ENCODE measurements at regions of chr4 and their contacts with region 1.

Region 1: DNA sequence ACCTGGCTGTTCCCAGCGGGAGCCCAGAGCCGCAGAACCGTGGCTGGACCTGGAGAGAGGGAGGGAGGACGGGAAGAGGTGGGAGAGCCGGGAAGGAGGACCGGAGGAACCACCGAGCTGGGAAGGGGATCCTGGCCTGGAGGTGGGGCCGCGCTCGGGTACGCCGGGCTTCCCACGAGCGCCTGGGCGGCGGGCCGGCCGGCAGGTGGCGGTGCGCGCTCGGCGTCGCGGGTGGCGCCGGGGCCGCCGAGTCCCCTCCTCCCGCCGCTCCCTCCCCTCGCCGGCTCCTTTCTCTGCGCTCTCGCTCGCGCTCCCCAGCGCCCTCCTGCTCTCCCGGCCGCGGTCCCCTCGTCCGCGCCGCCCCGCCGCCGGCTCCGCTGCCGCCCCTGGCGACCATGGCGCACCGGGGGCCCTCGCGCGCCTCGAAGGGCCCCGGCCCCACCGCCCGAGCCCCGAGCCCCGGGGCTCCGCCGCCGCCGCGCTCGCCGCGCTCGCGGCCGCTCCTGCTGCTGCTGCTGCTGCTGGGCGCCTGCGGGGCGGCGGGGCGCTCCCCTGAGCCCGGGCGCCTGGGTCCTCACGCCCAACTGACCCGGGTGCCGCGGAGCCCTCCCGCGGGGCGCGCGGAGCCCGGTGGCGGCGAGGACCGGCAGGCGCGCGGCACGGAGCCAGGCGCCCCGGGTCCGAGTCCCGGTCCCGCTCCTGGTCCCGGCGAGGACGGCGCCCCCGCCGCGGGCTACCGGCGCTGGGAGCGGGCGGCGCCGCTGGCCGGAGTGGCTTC is at the start of gene SORCS2:
- DNase-seq: no peak
- H3K4me3 ChIP-seq: peak within 1 kb of the TSS; percentile 5 to 43 (median 35)
- H3K27ac ChIP-seq: no peak within 1 kb of the TSS
- H3K4me1 ChIP-seq: peaks cover 15% of the 10 kb centered on the region
- H3K27me3 ChIP-seq: peaks cover 12% of the 10 kb centered on the region
- CTCF ChIP-seq: peak; percentile 26 to 49
- total RNA-seq, gene SORCS2: 1.6 to 10.7 TPM

Region 2: GRCh38 chr4:7206911-7207567 is 14.6 kb after region 1 on chr4:
- CTCF ChIA-PET with region 1: no interaction called
- dilution Hi-C with region 1: no loop called
- in situ Hi-C with region 1: no loop called
- intact Hi-C with region 1: loop called (anchors 1 kb)
- DNase-seq: peak; percentile 78
- H3K4me3 ChIP-seq: no peak overlapping the region
- H3K27ac ChIP-seq: peak overlapping the region; percentile 3
- H3K4me1 ChIP-seq: peaks cover 30% of the 10 kb centered on the region
- H3K27me3 ChIP-seq: no peaks in the 10 kb centered on the region
- CTCF ChIP-seq: no peak

Region 3: GRCh38 chr4:7295911-7296660 is 103.6 kb after region 1 on chr4:
- CTCF ChIA-PET with region 1: no interaction called
- dilution Hi-C with region 1: no loop called
- in situ Hi-C with region 1: loop called in 1 of 2 experiments (anchors 5 kb)
- intact Hi-C with region 1: loop called (anchors 1 kb)
- DNase-seq: peak; percentile 19
- H3K4me3 ChIP-seq: no peak overlapping the region
- H3K27ac ChIP-seq: no peak overlapping the region
- H3K4me1 ChIP-seq: no peaks in the 10 kb centered on the region
- H3K27me3 ChIP-seq: no peaks in the 10 kb centered on the region
- CTCF ChIP-seq: peak; percentile 54 to 80

Region 4: DNA sequence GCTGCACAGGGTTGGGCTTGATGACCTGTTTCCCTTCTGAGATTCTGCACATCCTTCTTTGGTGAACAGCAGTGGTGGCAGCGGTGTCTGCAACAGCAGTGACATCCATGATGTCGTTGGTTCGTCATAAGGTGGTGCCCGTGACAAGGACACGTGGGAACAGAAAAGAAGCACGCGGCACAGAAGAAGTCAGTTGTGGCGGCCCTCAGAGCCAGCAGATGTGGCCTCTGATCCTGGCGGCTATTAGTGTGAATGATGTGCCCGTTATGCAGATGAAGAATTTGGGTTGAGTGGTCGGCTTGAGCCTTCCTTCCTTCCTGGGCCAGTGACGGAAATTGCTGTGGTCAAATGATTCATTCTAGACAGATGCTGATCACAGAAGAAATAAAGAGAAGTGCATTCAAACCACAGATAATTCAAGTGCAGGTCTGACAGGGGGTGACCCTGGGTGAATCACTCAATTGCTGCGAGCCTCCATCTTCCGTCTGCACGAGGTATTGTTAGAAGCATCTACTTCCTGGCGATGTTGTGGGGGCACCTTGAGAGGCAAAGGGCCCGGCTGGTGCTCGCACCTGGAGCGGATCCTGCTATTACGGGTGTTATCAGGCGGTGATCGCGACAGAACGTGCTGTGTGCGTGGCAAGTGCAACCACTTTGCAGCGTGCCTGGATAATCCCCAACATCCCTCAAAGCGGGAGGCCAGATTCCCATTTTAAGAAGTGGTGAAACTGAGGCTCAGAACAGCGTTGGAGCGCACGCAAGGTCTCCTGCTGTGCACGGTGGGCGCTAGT is 457.5 kb after region 1 on chr4:
- CTCF ChIA-PET with region 1: no interaction called
- dilution Hi-C with region 1: no loop called
- in situ Hi-C with region 1: no loop called
- intact Hi-C with region 1: loop called (anchors 5 kb)
- DNase-seq: peak; percentile 82
- H3K4me3 ChIP-seq: no peak overlapping the region
- H3K27ac ChIP-seq: peak overlapping the region; percentile 33
- H3K4me1 ChIP-seq: peaks cover 51% of the 10 kb centered on the region
- H3K27me3 ChIP-seq: no peaks in the 10 kb centered on the region
- CTCF ChIP-seq: no peak

Region 5: DNA sequence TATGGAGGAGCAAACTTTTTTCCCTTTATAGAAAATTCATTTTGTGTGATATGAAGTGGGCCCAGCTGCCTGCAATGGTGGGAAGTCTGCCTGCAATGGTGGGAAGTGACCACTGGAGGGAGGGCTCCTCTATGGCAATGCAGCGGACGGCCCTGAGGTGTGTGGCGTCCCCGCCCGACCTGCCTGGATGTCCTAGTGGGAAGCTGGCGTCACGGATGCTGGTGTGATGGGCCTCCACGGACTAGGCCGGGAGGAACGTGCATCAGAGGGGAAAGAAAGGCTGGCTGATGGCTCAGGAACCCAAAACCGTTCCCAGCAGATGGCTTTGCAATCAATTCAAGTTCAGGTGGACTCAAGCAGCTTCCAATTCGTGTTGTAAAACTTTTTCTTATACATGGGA is 569.3 kb after region 1 on chr4:
- CTCF ChIA-PET with region 1: no interaction called
- dilution Hi-C with region 1: loop called (anchors 10 kb)
- in situ Hi-C with region 1: no loop called
- intact Hi-C with region 1: no loop called
- DNase-seq: no peak
- H3K4me3 ChIP-seq: no peak overlapping the region
- H3K27ac ChIP-seq: no peak overlapping the region
- H3K4me1 ChIP-seq: peaks cover 4% of the 10 kb centered on the region
- H3K27me3 ChIP-seq: no peaks in the 10 kb centered on the region
- CTCF ChIP-seq: peak; percentile 36 to 49